ENCODE measurements at regions of chr4 and their contacts with region 1.

Region 1: DNA sequence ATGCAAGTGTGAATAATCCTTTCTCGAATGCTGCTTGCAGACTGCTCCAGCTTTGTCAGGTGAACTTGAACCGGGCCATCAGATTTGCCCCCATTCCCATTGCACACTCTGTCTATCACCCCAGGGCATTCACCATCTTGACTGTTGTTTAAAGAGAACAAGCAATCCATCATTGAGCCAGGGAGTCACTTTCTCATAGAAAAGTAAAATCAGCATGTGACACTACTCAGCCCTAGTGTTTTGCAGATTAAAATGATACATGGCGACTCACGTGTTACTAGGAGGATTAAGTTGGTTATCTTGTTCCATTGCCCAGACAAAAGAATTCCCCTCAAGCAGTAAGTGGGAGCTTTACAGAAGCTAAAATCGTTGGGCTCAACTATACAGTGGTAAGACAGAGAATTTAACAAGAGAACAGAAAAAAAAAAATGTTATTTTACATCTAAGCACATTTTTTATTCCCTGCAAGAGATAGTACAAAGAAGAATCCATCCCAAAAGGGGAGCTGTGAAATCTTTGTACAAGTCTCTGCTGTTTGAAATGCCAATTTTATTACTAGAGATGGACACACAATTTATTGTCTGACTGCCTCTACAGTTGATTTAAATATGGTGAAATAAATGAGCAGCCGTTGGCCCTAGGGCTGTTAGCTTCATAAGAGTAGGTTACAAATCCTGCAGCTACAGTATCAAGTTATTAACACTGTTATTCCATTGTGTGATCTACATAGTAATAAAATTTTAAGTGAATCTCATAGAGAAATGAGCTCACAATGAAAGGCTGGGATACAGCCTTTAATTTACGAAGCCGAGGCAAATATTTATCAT is 67.5 kb downstream of the NEUROG2 start:
- DNase-seq: no peak

Region 2: DNA sequence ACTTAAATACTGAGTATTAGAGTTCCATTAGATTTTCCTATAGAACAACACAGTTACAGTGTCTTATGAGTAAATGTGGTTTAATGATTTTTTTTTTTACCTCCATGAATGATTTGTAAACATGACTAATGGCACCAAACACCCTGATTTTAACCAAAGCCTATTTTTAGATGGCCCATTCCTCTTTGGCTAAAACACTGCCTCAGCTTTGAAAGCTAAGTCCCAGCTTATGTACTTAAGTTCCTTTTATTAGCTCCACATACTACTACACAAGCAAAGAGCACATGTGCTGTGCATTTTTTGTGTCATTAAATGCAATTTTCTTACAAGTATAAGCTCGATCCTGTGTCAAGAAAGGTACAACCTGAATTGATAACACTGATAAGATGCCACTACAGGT is 1250.1 kb before region 1 on chr4:
- intact Hi-C with region 1: no loop called
- DNase-seq: no peak

Region 3: DNA sequence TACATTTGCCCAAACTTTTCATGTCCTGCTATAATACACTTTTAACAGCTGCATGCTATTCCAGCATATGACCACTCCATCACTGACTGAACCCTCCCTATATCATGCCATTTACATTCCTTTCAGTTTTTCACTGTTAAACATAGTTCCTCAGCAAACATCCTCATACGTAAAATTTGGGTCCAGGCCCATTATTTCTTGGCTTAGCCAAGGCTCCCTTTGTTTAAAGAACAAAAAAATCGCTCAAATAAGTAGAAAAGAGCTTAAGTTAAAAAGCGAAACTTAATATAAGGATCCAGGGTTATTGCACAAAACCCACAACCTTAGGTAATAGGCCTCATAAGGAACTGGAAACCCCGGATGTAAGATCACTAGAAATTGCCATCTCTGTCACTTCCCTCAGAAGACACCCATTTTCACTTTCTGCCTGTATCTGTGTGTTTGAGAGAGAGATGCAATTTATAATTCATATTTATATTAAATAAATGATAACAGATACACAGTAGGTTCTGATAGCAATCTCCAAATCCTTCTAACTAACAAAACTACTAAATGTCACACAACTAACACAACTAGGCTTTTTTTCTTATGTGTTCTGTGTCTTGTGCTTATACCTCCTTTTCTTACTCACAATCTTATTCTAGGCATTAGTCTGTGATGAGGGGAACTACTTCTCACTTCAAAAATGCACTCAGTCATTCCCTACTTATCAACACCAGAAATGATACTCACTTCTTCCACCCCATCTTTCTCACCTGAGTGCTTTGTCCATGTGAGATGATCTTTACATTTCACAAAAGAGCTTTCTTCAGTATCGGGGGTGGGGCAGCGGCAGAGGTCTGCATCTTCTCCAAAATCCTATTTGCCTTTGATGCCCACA is 363.1 kb before region 1 on chr4:
- intact Hi-C with region 1: loop called in 1 of 2 experiments (anchors 5 kb)
- DNase-seq: no peak

Measured in posterior vena cava (tissue), 2 donors.